ENCODE measurements at regions of chr4 and their contacts with region 1.

Region 1: GRCh38 chr4:109803924-109804571 is 2.2 kb upstream of the CFI start:
- DNase-seq: peak; percentile 83
- H3K4me3 ChIP-seq: no peak overlapping the region
- H3K27ac ChIP-seq: no peak overlapping the region
- H3K4me1 ChIP-seq: peaks cover 3% of the 10 kb centered on the region
- H3K27me3 ChIP-seq: no peaks in the 10 kb centered on the region
- CTCF ChIP-seq: peak; percentile 74

Region 2: GRCh38 chr4:109424093-109424841 is 379.8 kb before region 1 on chr4:
- CTCF ChIA-PET with region 1: interaction called, 7 read pairs
- POLR2A ChIA-PET with region 1: no interaction called
- intact Hi-C with region 1: loop called (anchors 2 kb)
- DNase-seq: no peak
- H3K4me3 ChIP-seq: no peak overlapping the region
- H3K27ac ChIP-seq: no peak overlapping the region
- H3K4me1 ChIP-seq: peaks cover 8% of the 10 kb centered on the region
- H3K27me3 ChIP-seq: no peaks in the 10 kb centered on the region
- CTCF ChIP-seq: no peak

Region 3: DNA sequence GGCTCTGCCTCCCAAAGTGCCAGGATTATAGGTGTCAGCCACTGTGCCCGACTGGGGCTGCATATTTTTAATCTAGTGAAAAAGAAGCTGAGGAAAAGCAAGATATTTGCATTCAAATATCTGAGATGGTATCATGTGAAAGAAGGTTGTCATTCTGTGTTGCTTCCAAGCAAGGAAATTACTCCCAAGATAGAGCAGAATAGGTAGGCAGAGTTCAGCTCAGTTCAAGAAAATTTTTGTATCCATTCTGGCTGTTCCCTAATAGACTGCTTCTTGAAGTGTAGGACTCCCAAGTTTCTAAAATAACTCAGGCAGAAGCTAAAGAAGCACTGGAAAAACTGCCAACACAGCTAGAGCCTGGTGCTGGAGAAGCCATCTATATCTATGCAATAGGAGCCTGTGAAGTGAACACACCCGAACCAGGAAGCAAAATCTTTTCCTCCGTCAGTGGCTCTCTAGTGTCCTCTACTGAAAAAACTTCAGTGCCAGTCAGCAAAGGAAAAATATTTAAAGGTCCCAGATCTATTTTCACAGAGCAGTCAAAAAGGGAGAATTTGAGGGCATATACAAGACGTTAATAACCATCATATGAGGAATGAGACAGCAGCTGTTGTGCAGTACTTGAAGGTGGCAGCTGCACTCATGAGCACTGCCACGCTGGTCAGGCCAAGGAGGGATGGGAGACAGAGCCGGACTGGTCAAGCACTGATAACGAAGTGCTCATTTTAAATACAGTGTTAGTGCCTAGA is 229.8 kb before region 1 on chr4:
- CTCF ChIA-PET with region 1: no interaction called
- POLR2A ChIA-PET with region 1: no interaction called
- intact Hi-C with region 1: loop called (anchors 5 kb)
- DNase-seq: peak; percentile 57
- H3K4me3 ChIP-seq: no peak overlapping the region
- H3K27ac ChIP-seq: no peak overlapping the region
- H3K4me1 ChIP-seq: peaks cover 27% of the 10 kb centered on the region
- H3K27me3 ChIP-seq: no peaks in the 10 kb centered on the region
- CTCF ChIP-seq: peak; percentile 39; the same call in 1 of the 2 replicates

Region 4: GRCh38 chr4:109702950-109703663 is 100.9 kb before region 1 on chr4 and contains the start of gene CASP6:
- CTCF ChIA-PET with region 1: interaction called, 7 read pairs
- POLR2A ChIA-PET with region 1: no interaction called
- intact Hi-C with region 1: loop called (anchors 2 kb)
- DNase-seq: peak; percentile 86
- H3K4me3 ChIP-seq: peak within 1 kb of the TSS; percentile 91
- H3K27ac ChIP-seq: peak within 1 kb of the TSS; percentile 90
- H3K4me1 ChIP-seq: peaks cover 17% of the 10 kb centered on the region
- H3K27me3 ChIP-seq: no peaks in the 10 kb centered on the region
- CTCF ChIP-seq: peak; percentile 75
- total RNA-seq, gene CASP6: 30.5 and 33.0 TPM in 2 replicates

Measured in A673 (cell line).